Mammary epithelial cell (primary cell): ENCODE measurements at regions of chr5 and their contacts with region 1.

Region 1: DNA sequence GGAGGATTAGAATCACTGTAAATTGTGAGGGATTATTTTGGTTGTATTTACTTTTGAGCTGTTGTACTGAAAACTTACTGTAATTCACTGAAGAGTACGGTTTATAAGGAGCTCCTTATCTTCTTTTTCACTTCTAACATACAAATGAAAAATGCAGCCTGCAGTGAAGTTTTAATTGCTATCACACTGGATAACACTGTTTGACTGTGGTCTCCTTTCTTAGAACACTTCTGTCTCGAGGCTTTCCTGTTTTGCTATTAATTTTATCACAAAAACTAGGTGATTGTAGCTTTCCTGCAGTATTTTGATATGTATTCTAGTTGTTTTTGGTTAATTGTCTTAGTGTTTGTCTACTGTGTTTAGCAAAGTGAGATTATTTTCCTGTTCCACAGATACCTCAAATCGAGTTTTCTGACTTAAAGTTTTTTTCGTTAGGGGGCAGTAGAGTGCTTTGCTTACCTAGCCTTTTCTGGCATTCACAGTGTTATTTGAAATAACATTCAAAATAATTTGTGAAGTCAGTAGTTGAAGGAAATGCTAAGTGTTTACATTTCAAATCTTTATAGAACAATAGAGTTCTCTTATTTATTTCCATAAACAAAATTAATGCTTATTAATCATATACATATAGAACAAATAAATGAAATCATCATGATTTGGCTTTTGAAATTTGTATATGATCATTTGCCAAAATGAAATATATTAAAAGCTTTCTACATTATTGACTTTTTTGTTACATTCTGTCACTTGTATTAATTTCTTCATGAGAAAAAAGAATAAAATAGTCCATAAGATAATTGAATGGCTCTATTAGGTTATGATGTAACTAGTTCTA is 52.9 kb downstream of the COMMD10 start:
- DNase-seq: peak; percentile 27
- H3K4me3 ChIP-seq: no peak overlapping the region
- H3K27ac ChIP-seq: no peak overlapping the region
- H3K4me1 ChIP-seq: no peaks in the 10 kb centered on the region
- H3K27me3 ChIP-seq: no peaks in the 10 kb centered on the region
- CTCF ChIP-seq: peak; percentile 70 to 79

Region 2: DNA sequence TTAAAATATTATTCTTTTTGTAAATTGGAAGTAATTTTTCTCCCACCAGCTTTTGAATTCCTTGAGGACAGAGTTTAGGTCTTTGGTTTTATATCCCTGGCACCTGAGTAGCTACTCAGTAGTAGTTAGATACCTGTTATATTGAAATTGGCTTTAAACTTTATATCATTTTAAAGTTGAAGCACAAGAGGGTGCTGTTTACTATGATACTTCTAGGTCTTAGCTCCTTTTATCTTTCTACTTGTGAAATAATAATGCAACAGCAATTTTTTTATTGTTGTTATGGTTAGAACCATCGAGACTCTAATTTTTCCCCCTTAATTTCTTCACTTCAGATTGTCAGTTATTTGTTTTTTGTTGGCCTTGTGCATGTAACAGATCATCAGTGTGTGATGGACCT is 249.7 kb before region 1 on chr5:
- CTCF ChIA-PET with region 1: no interaction called
- dilution Hi-C with region 1: no loop called
- in situ Hi-C with region 1: no loop called
- intact Hi-C with region 1: no loop called
- DNase-seq: no peak
- H3K4me3 ChIP-seq: no peak overlapping the region
- H3K27ac ChIP-seq: no peak overlapping the region
- H3K4me1 ChIP-seq: no peaks in the 10 kb centered on the region
- H3K27me3 ChIP-seq: no peaks in the 10 kb centered on the region
- CTCF ChIP-seq: peak in 1 of 2 donors; percentile 9

Region 3: GRCh38 chr5:116076496-116076895 is 61.3 kb before region 1 on chr5:
- CTCF ChIA-PET with region 1: no interaction called
- dilution Hi-C with region 1: no loop called
- in situ Hi-C with region 1: no loop called
- intact Hi-C with region 1: no loop called
- DNase-seq: no peak
- H3K4me3 ChIP-seq: no peak overlapping the region
- H3K27ac ChIP-seq: no peak overlapping the region
- H3K4me1 ChIP-seq: no peaks in the 10 kb centered on the region
- H3K27me3 ChIP-seq: no peaks in the 10 kb centered on the region
- CTCF ChIP-seq: no peak

Region 4: GRCh38 chr5:116097301-116097700 is 40.5 kb before region 1 on chr5:
- CTCF ChIA-PET with region 1: no interaction called
- dilution Hi-C with region 1: no loop called
- in situ Hi-C with region 1: no loop called
- intact Hi-C with region 1: no loop called
- DNase-seq: peak; percentile 62
- H3K4me3 ChIP-seq: no peak overlapping the region
- H3K27ac ChIP-seq: no peak overlapping the region
- H3K4me1 ChIP-seq: no peaks in the 10 kb centered on the region
- H3K27me3 ChIP-seq: no peaks in the 10 kb centered on the region
- CTCF ChIP-seq: no peak

Region 5: DNA sequence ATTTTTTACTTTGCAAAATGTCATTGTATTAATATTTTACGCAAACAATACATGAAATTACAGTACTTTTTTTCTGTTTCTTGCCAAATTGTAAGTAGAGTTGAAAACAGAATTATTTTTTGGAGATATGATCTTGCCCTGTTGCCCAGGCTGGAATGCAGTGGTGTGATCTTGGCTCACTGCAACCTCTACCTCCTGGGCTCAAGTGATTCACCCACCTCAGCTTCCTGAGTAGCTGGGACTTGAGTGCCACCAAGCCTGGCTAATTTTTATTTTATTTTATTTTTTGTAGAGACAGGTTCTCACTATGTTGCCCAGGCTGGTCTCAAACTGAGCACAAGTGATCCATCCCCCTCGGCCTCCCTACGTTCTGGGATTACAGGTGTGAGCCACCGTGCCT is 59.5 kb after region 1 on chr5:
- CTCF ChIA-PET with region 1: no interaction called
- dilution Hi-C with region 1: no loop called
- in situ Hi-C with region 1: no loop called
- intact Hi-C with region 1: no loop called
- DNase-seq: peak; percentile 2
- H3K4me3 ChIP-seq: no peak overlapping the region
- H3K27ac ChIP-seq: no peak overlapping the region
- H3K4me1 ChIP-seq: peaks cover 2% of the 10 kb centered on the region
- H3K27me3 ChIP-seq: no peaks in the 10 kb centered on the region
- CTCF ChIP-seq: no peak

Region 6: GRCh38 chr5:116494784-116495450 is 357.2 kb after region 1 on chr5:
- CTCF ChIA-PET with region 1: no interaction called
- dilution Hi-C with region 1: no loop called
- in situ Hi-C with region 1: no loop called
- intact Hi-C with region 1: loop called (anchors 5 kb)
- DNase-seq: no peak
- H3K4me3 ChIP-seq: no peak overlapping the region
- H3K27ac ChIP-seq: no peak overlapping the region
- H3K4me1 ChIP-seq: peaks cover 28% of the 10 kb centered on the region
- H3K27me3 ChIP-seq: no peaks in the 10 kb centered on the region
- CTCF ChIP-seq: no peak

Region 7: GRCh38 chr5:116557669-116558271 is 420.0 kb after region 1 on chr5:
- CTCF ChIA-PET with region 1: no interaction called
- dilution Hi-C with region 1: no loop called
- in situ Hi-C with region 1: loop called in 1 of 2 experiments (anchors 25 kb)
- intact Hi-C with region 1: loop called (anchors 5 kb)
- DNase-seq: peak; percentile 9
- H3K4me3 ChIP-seq: no peak overlapping the region
- H3K27ac ChIP-seq: no peak overlapping the region
- H3K4me1 ChIP-seq: no peaks in the 10 kb centered on the region
- H3K27me3 ChIP-seq: peaks cover 7% of the 10 kb centered on the region
- CTCF ChIP-seq: peak; percentile 56 to 76

Region 8: GRCh38 chr5:116947691-116948528 is 810.1 kb after region 1 on chr5:
- CTCF ChIA-PET with region 1: no interaction called
- dilution Hi-C with region 1: no loop called
- in situ Hi-C with region 1: loop called (anchors 25 kb)
- intact Hi-C with region 1: no loop called
- DNase-seq: peak; percentile 73
- H3K4me3 ChIP-seq: no peak overlapping the region
- H3K27ac ChIP-seq: no peak overlapping the region
- H3K4me1 ChIP-seq: no peaks in the 10 kb centered on the region
- H3K27me3 ChIP-seq: no peaks in the 10 kb centered on the region
- CTCF ChIP-seq: peak; percentile 80 to 92